Activated CD8-positive, alpha-beta memory T cell treated with anti-CD3 and anti-CD28 coated beads, Interleukin-2, amount 10 ng/mL, durations not matched to agents 7 days and 5 days (primary cell): ENCODE measurements at regions of chr17 and their contacts with region 1.

Region 1: GRCh38 chr17:59786536-59787319 is 79.3 kb downstream of the VMP1 start:
- DNase-seq: peak; percentile 96
- ATAC-seq: peak; percentile 83
- H3K4me3 Mint-ChIP-seq: peak overlapping the region; percentile 73
- H3K27ac Mint-ChIP-seq: peak overlapping the region; percentile 93
- H3K4me1 Mint-ChIP-seq: peaks cover 64% of the 10 kb centered on the region
- H3K27me3 Mint-ChIP-seq: no peaks in the 10 kb centered on the region

Region 2: DNA sequence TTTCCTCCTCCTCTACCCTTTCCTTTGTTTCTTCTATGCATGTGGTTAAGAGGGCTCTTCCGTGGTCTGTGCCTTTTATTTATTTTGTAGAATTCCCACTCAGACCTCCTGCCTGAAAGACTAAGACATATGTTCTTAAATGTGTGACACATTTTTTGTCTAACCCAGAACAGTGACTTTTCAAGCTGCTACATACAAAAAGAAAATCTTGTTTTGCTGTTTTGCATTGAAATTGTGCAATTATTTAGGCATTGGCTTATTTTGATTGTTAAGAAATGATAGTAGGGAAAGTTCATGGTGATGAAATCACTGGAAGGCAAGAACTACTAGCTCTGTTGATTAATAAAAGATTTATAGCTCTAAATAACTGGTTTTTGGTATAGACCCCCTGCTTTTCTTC is 29.2 kb after region 1 on chr17:
- CTCF ChIA-PET with region 1: interaction called, 11 read pairs
- DNase-seq: no peak
- ATAC-seq: no peak
- H3K4me3 Mint-ChIP-seq: no peak overlapping the region
- H3K27ac Mint-ChIP-seq: no peak overlapping the region
- H3K4me1 Mint-ChIP-seq: peaks cover 42% of the 10 kb centered on the region
- H3K27me3 Mint-ChIP-seq: no peaks in the 10 kb centered on the region

Region 3: DNA sequence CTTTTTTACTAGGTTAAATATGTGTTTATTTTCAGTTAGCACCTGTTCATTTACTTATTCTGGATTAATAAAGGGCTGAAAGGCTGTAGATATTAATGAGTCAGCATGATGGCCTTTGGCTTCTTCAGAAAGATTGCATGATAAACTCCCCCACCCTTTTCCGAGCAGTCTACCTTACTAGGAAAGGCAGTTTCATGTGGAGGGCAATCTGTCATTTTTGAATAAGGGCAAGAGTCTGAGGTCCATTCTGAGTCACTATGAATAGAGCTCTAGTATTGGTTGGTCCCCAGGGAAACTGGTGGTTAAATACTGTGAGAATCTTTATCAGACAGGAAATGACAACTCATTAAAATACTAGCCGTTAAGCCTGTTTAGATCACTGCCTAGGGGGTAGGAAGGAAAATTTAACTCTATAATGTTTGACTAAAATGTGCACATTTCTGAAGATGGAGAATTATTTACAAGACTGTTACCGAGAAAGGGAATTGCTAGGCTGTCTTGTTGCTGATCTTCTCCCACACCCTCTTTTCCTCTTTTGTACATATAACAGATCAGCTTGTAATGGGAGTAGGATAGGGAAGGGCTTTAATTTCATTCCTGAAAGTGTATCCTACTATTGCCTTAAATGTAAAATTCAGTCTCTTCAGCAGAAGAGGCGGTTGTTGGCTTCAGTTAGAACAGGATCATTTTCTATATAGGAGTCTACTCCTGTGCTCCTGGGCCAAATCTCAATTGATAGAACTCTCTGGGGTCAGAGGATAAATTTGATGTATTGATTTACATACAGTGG is 42.7 kb after region 1 on chr17:
- CTCF ChIA-PET with region 1: interaction called, 51 read pairs
- DNase-seq: peak; percentile 80
- ATAC-seq: peak; percentile 78
- H3K4me3 Mint-ChIP-seq: peak overlapping the region; percentile 74
- H3K27ac Mint-ChIP-seq: peak overlapping the region; percentile 98
- H3K4me1 Mint-ChIP-seq: peaks cover 83% of the 10 kb centered on the region
- H3K27me3 Mint-ChIP-seq: no peaks in the 10 kb centered on the region

Region 4: DNA sequence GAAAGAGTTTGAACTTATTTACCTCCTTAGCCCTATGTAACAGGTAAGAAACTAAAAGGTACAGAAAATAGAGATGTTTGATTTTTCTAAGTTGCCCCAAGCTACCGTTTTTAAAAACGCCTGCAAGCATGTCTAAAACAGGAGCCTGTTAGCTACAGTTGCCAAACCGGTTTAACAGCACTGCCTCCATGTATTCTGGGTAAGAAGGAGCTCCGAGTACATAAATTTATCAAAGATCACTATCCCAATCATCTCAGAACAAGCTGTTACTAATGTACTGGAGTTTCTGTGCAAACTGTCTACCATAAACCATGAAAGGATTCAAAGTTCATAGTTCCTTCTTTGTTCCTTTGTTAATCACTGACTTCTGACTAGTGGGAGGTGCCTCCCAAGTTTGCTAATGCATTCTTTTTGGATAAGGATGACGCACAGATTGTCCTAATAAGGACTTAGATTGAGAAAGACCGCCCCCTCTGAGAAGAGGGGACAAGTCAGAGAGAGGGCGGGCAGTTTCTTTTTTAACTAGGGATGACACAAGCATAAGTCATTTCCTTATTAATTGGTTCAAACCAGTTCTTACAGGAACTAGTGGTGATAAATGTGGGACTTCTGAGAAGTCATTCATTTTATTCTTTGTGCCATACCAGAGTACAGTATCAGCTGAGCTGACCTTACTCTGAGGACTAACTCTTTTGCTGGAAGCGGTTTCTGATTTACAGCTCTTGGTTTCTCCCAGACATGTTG is 50.8 kb after region 1 on chr17:
- CTCF ChIA-PET with region 1: interaction called, 90 read pairs
- DNase-seq: peak; percentile 88
- ATAC-seq: peak; percentile 86
- H3K4me3 Mint-ChIP-seq: peak overlapping the region; percentile 95
- H3K27ac Mint-ChIP-seq: peak overlapping the region; percentile 100
- H3K4me1 Mint-ChIP-seq: peaks cover 38% of the 10 kb centered on the region
- H3K27me3 Mint-ChIP-seq: no peaks in the 10 kb centered on the region